ENCODE measurements at regions of chr2 and their contacts with region 1.

Region 1: DNA sequence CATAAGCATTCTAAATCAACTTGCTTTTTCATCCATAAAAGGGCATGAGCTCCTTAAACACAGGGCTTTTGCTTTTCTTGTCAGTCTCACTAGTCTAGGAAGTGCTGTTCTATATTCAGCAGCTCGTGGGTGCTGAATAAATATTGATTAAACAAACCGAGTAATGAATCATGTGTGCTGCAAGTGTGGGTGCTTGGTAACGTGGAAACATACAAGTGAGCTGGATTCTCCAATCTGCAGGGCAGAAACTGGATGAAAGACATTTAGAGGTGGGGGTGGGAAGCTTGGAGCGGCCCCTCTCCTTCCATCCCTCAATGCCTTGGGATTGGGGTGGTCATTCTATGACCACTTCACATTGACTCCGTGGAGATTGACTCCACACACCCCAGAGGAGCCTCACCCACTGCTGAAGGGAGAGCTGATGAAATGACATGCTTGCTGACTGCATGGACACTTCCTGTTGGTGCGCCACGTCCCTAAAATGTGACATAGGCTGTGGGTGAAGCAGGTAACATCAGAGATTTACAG is 114.6 kb downstream of the DOCK10 start:
- DNase-seq: peak; percentile 83 to 92 (median 85)
- H3K4me3 ChIP-seq: peak overlapping the region in 1 of 2 donors; percentile 12
- H3K4me3 Mint-ChIP-seq: peak overlapping the region; percentile 65 to 72 (median 70)
- H3K27ac ChIP-seq: peak overlapping the region; percentile 63
- H3K27ac Mint-ChIP-seq: peak overlapping the region; percentile 92 to 99 (median 96)
- H3K4me1 ChIP-seq: peaks cover 100% of the 10 kb centered on the region
- H3K4me1 Mint-ChIP-seq: peaks cover 89 to 100% (median 94%) of the 10 kb centered on the region in 4 donors
- H3K27me3 ChIP-seq: no peaks in the 10 kb centered on the region
- H3K27me3 Mint-ChIP-seq: no peaks in the 10 kb centered on the region

Region 2: DNA sequence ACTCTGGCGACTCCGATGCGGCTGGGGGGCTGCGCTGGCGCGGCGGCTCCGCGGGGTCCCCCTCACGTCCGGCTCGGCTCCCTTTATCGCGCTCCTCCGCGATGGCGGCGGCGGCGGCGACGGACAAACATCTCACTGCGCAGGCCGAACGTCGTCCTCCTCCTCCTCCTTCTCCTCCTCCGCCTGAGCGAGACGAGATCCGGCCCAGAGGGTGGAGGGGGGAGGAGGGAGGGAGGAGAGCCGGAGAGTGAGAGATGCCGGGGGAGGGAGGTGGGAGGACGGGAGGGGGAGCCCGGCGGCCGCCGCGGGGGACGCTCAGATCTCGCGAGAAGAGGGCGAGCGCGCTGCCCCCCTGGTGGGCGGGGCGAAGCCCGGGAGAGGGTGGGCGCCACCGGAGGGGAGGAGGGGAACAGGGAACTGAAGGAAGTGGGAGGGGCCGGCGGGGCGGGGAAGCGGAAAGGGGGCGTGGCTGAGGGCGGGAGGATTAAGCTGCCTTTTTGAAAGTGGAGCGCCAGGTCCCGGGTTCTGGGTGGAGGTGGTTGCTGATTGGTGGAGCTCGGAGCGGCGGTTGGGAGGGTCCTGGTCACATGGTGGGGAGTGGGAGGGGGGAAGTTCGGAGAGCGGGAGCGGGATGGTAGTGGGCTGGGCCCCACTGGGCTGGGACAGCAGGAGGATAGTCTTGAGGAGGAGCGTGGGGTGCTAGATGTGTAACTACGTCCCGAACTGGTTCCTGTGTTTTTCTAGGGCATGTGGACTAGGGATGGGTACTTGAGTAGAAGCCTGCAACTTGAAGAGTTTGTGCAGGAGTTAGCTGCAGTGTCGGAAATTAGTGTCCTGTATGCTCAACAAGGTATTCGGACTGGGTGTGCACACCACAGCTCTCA is 342.3 kb before region 1 on chr2 and contains the start of gene CUL3:
- CTCF ChIA-PET with region 1: no interaction called
- POLR2A ChIA-PET with region 1: no interaction called
- intact Hi-C with region 1: loop called (anchors 5 kb)
- DNase-seq: peak; percentile 98 to 100 (median 99)
- H3K4me3 ChIP-seq: peak within 1 kb of the TSS; percentile 68 to 93
- H3K4me3 Mint-ChIP-seq: peak within 1 kb of the TSS; percentile 96 to 99 (median 97)
- H3K27ac ChIP-seq: peak within 1 kb of the TSS; percentile 75
- H3K27ac Mint-ChIP-seq: peak within 1 kb of the TSS; percentile 89 to 98 (median 96)
- H3K4me1 ChIP-seq: peaks cover 43% of the 10 kb centered on the region
- H3K4me1 Mint-ChIP-seq: peaks cover 23 to 49% (median 37%) of the 10 kb centered on the region in 4 donors
- H3K27me3 ChIP-seq: no peaks in the 10 kb centered on the region
- H3K27me3 Mint-ChIP-seq: no peaks in the 10 kb centered on the region
- total RNA-seq, gene CUL3: 83.4 to 85.3 TPM

Region 3: GRCh38 chr2:224915136-224915535 is 12.6 kb before region 1 on chr2:
- CTCF ChIA-PET with region 1: no interaction called
- POLR2A ChIA-PET with region 1: interaction called, 3 read pairs
- intact Hi-C with region 1: loop called (anchors 2 kb)
- DNase-seq: no peak
- H3K4me3 ChIP-seq: no peak overlapping the region
- H3K4me3 Mint-ChIP-seq: no peak overlapping the region
- H3K27ac ChIP-seq: no peak overlapping the region
- H3K27ac Mint-ChIP-seq: peak overlapping the region in 1 of 7 donors; percentile 24
- H3K4me1 ChIP-seq: peaks cover 30% of the 10 kb centered on the region
- H3K4me1 Mint-ChIP-seq: peaks cover 16 to 31% (median 19%) of the 10 kb centered on the region in 4 donors
- H3K27me3 ChIP-seq: no peaks in the 10 kb centered on the region
- H3K27me3 Mint-ChIP-seq: no peaks in the 10 kb centered on the region

Region 4: DNA sequence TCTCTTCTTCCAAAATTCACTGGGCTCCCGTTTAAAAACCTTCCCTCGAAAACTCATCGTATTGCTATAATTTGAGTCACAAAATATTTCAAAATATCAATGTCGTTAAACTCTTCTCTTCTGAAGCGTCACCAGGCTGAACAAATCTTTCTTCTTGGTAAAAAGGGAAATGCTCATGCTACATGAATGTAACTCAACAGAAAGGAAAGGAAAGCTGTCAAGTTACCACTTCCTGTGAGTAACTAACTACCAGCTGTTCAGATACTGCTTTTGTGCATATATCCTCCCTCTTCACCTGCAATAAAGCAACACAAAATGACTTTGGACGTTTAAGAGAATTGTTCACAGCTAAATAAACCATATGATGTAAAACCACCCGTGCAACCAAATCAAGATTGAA is 19.2 kb after region 1 on chr2:
- CTCF ChIA-PET with region 1: interaction called, 14 read pairs
- POLR2A ChIA-PET with region 1: interaction called, 279 read pairs
- intact Hi-C with region 1: loop called (anchors 1 kb)
- DNase-seq: peak; percentile 59 to 75 (median 66)
- H3K4me3 ChIP-seq: peak overlapping the region; percentile 59 to 64
- H3K4me3 Mint-ChIP-seq: peak overlapping the region; percentile 84 to 95 (median 92)
- H3K27ac ChIP-seq: peak overlapping the region; percentile 75
- H3K27ac Mint-ChIP-seq: peak overlapping the region; percentile 89 to 98 (median 94)
- H3K4me1 ChIP-seq: peaks cover 81% of the 10 kb centered on the region
- H3K4me1 Mint-ChIP-seq: peaks cover 55 to 85% (median 72%) of the 10 kb centered on the region in 4 donors
- H3K27me3 ChIP-seq: no peaks in the 10 kb centered on the region
- H3K27me3 Mint-ChIP-seq: no peaks in the 10 kb centered on the region

Region 5: GRCh38 chr2:225008935-225009334 is 81.2 kb after region 1 on chr2:
- CTCF ChIA-PET with region 1: interaction called, 92 read pairs
- POLR2A ChIA-PET with region 1: interaction called, 3 read pairs
- intact Hi-C with region 1: no loop called
- DNase-seq: no peak
- H3K4me3 ChIP-seq: no peak overlapping the region
- H3K4me3 Mint-ChIP-seq: peak overlapping the region in 3 of 8 donors; percentile 3 to 40 (median 32)
- H3K27ac ChIP-seq: no peak overlapping the region
- H3K27ac Mint-ChIP-seq: peak overlapping the region in 4 of 7 donors; percentile 36 to 78 (median 56)
- H3K4me1 ChIP-seq: peaks cover 93% of the 10 kb centered on the region
- H3K4me1 Mint-ChIP-seq: peaks cover 62 to 98% (median 85%) of the 10 kb centered on the region in 4 donors
- H3K27me3 ChIP-seq: no peaks in the 10 kb centered on the region
- H3K27me3 Mint-ChIP-seq: no peaks in the 10 kb centered on the region

Measured in CD4-positive, alpha-beta memory T cell (primary cell).